OCI-LY7 (cell line): ENCODE measurements at regions of chr1 and their contacts with region 1.

Region 1: GRCh38 chr1:171081314-171081753 is 9.4 kb upstream of the FMO3 start:
- DNase-seq: peak; percentile 36
- H3K4me3 ChIP-seq: no peak overlapping the region
- H3K27ac ChIP-seq: no peak overlapping the region
- H3K4me1 ChIP-seq: no peaks in the 10 kb centered on the region
- CTCF ChIP-seq: peak; percentile 78

Region 2: GRCh38 chr1:171032822-171033702 is 48.3 kb before region 1 on chr1:
- CTCF ChIA-PET with region 1: no interaction called
- POLR2A ChIA-PET with region 1: no interaction called
- intact Hi-C with region 1: no loop called
- DNase-seq: no peak
- H3K4me3 ChIP-seq: no peak overlapping the region
- H3K27ac ChIP-seq: no peak overlapping the region
- H3K4me1 ChIP-seq: no peaks in the 10 kb centered on the region
- CTCF ChIP-seq: no peak

Region 3: DNA sequence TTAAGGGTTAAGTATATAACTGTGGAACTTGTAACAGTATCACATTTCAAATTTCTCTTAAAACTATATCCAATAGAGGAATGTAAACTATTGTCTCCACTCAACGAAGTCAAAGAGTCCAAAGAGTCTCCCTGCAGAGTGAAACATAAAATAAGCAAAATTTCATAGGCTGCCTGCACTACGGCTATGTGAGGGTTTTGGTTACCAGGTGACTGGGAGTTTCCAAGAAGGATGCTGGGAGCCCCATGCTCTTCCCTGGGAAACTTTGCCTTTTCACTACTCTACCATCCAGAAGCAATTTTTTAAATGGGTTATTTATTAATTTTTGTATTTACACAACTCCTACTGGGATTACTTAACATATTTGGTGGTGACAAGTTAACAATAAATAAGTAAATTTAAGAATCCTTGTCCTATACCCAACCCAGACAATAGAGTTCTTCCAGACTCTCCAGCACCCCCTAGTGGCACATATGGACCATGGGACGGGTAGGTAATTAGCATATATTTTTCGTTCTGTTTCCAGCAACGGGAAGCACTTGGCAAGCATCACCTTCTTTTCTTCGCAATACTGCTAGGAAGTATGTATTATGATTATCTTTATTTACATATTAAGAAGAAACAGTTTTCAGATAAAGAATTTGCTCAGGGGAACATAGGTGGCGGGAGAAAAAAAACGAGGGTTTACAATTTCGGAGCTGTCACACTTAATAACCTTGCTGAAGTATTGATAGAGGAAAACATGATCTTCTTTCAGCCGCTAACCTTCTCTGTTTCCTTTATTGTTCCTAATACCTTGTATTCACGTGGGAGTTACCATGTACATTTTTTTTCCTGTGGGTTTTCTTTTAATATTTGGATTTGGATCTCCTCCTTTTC is 107.3 kb after region 1 on chr1:
- CTCF ChIA-PET with region 1: no interaction called
- POLR2A ChIA-PET with region 1: no interaction called
- intact Hi-C with region 1: loop called (anchors 1 kb)
- DNase-seq: peak; percentile 65
- H3K4me3 ChIP-seq: no peak overlapping the region
- H3K27ac ChIP-seq: no peak overlapping the region
- H3K4me1 ChIP-seq: no peaks in the 10 kb centered on the region
- CTCF ChIP-seq: peak; percentile 96

Region 4: GRCh38 chr1:171576144-171576543 is 494.8 kb after region 1 on chr1:
- CTCF ChIA-PET with region 1: no interaction called
- POLR2A ChIA-PET with region 1: no interaction called
- intact Hi-C with region 1: no loop called
- DNase-seq: no peak
- H3K4me3 ChIP-seq: no peak overlapping the region
- H3K27ac ChIP-seq: no peak overlapping the region
- H3K4me1 ChIP-seq: no peaks in the 10 kb centered on the region
- CTCF ChIP-seq: no peak